ENCODE measurements at regions of chr2 and their contacts with region 1.

Region 1: DNA sequence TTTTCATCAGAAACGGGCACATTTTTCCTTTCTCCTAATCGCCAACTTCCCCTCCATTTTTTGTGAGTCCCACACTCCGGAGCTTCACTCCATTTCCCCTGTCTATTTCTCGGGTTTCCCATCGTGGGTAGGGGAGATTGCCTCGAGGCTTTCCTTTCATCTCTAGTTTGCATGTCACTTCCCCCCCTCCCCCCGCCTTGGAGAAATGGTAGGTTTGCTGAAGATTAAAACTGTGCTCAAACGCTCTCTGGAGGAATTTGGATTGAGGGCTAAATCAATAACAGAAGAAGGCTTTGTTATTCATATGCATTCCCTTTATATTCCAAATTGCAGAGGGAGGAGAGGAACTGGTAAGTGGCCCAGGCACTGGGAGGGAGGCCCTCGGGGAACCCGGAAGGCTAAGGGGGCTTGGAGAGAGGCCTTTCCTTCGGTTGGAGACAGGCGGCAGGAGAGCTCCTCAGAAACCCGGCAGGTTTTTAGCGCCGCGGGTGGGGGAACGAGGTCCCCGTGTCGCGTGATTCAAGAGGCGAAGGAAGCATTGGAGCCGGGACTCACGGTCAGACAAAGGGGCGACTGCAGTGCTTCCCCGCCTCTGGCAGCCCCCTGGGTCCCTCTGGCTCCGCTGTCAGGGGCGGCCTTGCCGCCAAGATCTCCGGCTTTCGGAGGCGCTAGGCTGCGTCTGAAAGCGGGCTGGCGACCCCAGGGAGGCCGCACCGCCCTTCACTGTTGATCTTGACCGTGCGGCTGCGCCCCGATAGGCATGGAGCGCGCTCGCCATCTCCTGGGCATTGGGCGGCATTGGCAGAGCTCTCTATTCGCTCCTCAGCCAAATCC is 2.4 kb upstream of the HOXD12 start:
- DNase-seq: peak in 1 of 2 donors; percentile 77
- H3K4me3 ChIP-seq: peak overlapping the region; percentile 53 to 61
- H3K27ac ChIP-seq: no peak overlapping the region
- H3K4me1 ChIP-seq: peaks cover 18 to 19% of the 10 kb centered on the region in 2 donors
- H3K27me3 ChIP-seq: peaks cover 74% of the 10 kb centered on the region
- CTCF ChIP-seq: peak; percentile 66 to 78 (median 72)

Region 2: DNA sequence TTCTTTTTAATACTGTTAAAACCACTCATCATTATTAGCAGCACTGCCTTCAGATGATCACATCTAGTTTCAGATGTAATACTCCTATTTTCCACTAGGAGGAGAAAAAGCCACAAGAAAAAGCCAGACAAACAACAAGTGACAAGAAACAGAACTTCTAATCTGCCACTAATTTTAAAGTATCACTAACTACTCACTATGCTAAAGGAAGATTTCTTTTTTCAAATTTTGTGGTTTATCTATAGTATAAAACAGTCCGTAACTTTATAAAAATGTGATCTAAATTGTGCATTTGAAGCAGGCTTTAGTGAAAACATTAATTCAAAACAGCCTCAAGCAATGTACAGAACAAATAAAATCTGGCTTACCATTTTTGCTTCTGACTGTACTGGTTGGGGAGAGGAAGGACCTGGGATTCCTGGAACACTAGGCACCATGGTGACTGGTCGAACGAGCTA is 986.0 kb before region 1 on chr2:
- intact Hi-C with region 1: loop called (anchors 10 kb)
- DNase-seq: no peak
- H3K4me3 ChIP-seq: no peak overlapping the region
- H3K27ac ChIP-seq: no peak overlapping the region
- H3K4me1 ChIP-seq: no peaks in the 10 kb centered on the region
- H3K27me3 ChIP-seq: no peaks in the 10 kb centered on the region
- CTCF ChIP-seq: peak; percentile 24 to 72 (median 54)

Region 3: GRCh38 chr2:175251425-175252041 is 845.7 kb before region 1 on chr2:
- intact Hi-C with region 1: loop called (anchors 5 kb)
- DNase-seq: no peak
- H3K4me3 ChIP-seq: no peak overlapping the region
- H3K27ac ChIP-seq: no peak overlapping the region
- H3K4me1 ChIP-seq: no peaks in the 10 kb centered on the region
- H3K27me3 ChIP-seq: no peaks in the 10 kb centered on the region
- CTCF ChIP-seq: peak in 2 of 3 experiments; percentile 27 to 53

Region 4: GRCh38 chr2:175366815-175367214 is 730.4 kb before region 1 on chr2:
- intact Hi-C with region 1: loop called (anchors 5 kb)
- DNase-seq: no peak
- H3K4me3 ChIP-seq: no peak overlapping the region
- H3K27ac ChIP-seq: no peak overlapping the region
- H3K4me1 ChIP-seq: no peaks in the 10 kb centered on the region
- H3K27me3 ChIP-seq: no peaks in the 10 kb centered on the region
- CTCF ChIP-seq: peak; percentile 37 to 55 (median 39)

Region 5: DNA sequence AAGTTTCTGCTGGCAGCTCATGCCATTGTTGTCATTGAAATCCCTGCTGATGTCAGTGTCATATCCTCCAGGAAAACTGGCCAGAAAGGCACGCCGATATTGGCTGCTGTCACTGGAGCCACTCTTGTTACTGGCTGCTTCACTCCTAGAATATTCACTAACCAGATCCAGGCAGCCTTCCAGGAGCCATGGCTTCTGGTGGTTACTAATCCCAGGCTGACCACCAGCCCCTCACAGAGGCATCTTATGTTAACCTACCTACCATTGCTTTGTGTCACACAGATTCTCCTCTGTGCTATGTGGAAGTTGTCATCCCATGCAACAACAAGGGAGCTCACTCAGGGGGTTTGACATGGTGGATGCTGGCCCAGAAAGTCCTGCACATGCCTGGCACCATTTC is 145.1 kb after region 1 on chr2:
- intact Hi-C with region 1: no loop called
- DNase-seq: no peak
- H3K4me3 ChIP-seq: no peak overlapping the region
- H3K27ac ChIP-seq: no peak overlapping the region
- H3K4me1 ChIP-seq: no peaks in the 10 kb centered on the region
- H3K27me3 ChIP-seq: no peaks in the 10 kb centered on the region
- CTCF ChIP-seq: no peak

Measured in ascending aorta (tissue), 2 donors.